Spleen (tissue), 13 donors: ENCODE measurements at regions of chr5 and their contacts with region 1.

Region 1: DNA sequence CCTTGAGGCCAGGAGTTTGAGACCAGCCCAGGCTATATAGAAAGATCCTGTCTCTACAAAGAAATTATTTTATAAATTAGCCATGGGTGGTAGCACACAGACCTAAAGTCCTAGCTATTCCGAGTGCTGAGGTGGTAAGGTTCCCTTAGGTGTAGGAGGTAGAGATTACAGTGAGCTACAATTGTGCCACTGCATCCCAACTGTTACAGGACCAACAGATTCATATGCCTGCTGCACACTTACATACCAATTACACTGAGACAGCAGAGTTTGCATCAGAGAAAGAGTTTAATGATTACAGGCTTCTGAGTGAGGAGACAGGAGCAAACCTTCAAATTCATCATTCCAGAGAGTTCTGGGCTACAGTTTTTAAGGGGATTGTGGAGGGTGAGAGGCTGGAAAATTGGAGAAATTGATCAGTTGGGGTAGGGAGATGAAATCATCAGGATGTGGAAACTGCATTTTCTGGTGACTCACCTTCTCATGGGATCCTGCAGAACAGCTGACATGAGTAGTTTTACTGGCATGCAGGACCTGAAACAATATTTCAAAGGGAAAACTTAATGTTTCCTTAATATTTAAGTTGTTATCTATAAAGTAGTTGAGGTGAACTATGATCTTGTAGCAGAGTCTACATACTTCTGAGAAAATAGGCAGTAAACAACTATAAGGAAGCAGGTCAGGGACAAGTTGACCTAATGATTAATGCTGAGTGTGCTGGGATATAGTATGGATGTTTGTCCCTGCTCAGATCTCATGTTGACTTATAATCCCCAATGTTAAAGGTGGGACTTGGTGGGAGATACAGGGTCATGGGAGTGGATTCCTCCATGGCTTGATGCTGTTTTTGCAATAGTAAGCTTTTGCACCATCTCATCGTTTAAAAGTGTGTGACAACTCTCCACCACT is 54.7 kb downstream of the ANXA2R start:
- DNase-seq: no peak
- H3K4me3 ChIP-seq: no peak overlapping the region
- H3K27ac ChIP-seq: peak overlapping the region in 1 of 8 donors; percentile 52
- H3K4me1 ChIP-seq: peaks cover 15 to 79% (median 57%) of the 10 kb centered on the region in 6 donors
- H3K27me3 ChIP-seq: no peaks in the 10 kb centered on the region
- CTCF ChIP-seq: no peak
- POLR2A ChIP-seq: no peak

Region 2: DNA sequence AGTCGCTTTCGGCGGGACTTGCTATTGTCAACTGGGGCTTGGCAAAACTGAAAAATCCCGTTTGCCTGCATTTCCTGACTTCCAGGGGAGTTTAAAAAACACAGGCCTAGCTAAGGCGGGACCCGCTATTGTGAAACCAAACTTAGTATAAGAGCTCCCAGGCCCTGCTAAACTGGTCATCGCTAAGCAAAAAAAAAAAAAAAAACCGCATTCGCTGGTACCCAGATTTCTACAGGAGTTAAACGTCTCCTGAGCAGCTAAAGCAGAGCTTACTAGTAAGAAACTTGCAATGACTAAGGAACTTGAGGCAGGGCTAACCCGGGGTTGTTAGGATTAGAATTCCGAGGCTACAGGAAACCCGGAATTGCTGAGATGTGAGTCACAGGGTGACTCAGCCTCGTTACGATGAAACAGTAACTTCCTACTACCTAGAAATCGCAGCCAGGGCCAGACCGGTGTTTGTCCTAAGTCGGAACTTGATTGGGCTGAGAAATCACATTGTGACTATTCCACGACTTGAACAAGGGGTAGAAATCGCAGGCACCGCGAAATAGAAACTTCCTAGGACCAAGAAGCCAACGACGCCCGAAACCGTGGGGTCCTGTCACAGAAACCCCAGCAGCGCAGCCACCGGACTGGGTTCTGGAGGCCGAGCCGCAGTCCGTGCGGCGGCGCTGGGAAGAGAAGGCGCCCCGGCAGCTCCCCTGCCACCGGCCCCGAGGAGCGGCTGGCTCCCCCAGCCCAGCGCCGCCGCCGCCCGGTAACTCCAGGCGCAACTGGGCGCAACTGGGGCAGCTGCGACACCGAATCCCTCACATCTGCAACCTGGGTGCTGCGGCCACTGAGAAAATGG is 34.7 kb before region 1 on chr5:
- intact Hi-C with region 1: loop called (anchors 5 kb)
- DNase-seq: no peak
- H3K4me3 ChIP-seq: peak overlapping the region; percentile 37 to 80 (median 49)
- H3K27ac ChIP-seq: peak overlapping the region; percentile 96 to 99 (median 98)
- H3K4me1 ChIP-seq: peaks cover 3 to 51% (median 41%) of the 10 kb centered on the region in 6 donors
- H3K27me3 ChIP-seq: peaks cover 0 to 67% (median 0%) of the 10 kb centered on the region in 7 donors
- CTCF ChIP-seq: no peak
- POLR2A ChIP-seq: peak in 1 of 3 donors; percentile 20